Mammary epithelial cell (primary cell): ENCODE measurements at regions of chr2 and their contacts with region 1.

Region 1: GRCh38 chr2:170486730-170487129 is 228.4 kb upstream of the SP5 start:
- DNase-seq: no peak
- H3K4me3 ChIP-seq: no peak overlapping the region
- H3K27ac ChIP-seq: no peak overlapping the region
- H3K4me1 ChIP-seq: no peaks in the 10 kb centered on the region
- H3K27me3 ChIP-seq: no peaks in the 10 kb centered on the region
- CTCF ChIP-seq: peak in 1 of 2 donors; percentile 30

Region 2: GRCh38 chr2:170454471-170455372 is 32.0 kb before region 1 on chr2:
- CTCF ChIA-PET with region 1: no interaction called
- dilution Hi-C with region 1: loop called (anchors 5 kb)
- in situ Hi-C with region 1: no loop called
- intact Hi-C with region 1: no loop called
- DNase-seq: peak; percentile 8
- H3K4me3 ChIP-seq: no peak overlapping the region
- H3K27ac ChIP-seq: no peak overlapping the region
- H3K4me1 ChIP-seq: no peaks in the 10 kb centered on the region
- H3K27me3 ChIP-seq: no peaks in the 10 kb centered on the region
- CTCF ChIP-seq: no peak

Region 3: GRCh38 chr2:170715062-170715931 is 228.6 kb after region 1 on chr2 and contains the start of gene SP5:
- CTCF ChIA-PET with region 1: no interaction called
- dilution Hi-C with region 1: no loop called
- in situ Hi-C with region 1: no loop called
- intact Hi-C with region 1: loop called (anchors 10 kb)
- DNase-seq: no peak
- H3K4me3 ChIP-seq: peak within 1 kb of the TSS; percentile 39 to 57 (median 40)
- H3K27ac ChIP-seq: no peak within 1 kb of the TSS
- H3K4me1 ChIP-seq: peaks cover 31% of the 10 kb centered on the region
- H3K27me3 ChIP-seq: peaks cover 68% of the 10 kb centered on the region
- CTCF ChIP-seq: no peak
- total RNA-seq, gene SP5: not detected

Region 4: DNA sequence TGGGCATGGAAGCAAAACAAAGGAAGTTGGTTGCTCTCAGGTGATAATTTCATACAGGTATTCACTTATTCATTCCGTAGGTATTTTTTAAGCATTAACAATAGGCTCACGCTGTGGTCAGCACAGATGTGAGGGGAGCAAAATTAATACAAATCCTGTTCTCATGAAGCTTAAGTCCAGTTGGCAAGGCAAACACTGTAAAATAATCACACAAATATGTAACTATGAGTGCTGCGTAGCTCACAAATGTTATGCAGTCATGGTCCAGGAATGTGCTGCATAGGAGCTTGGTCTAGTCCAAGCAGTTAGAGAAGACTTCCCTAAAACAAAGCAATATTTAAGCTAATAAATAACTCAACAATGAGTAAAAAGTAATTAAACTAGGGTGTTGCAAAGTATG is 252.3 kb after region 1 on chr2:
- CTCF ChIA-PET with region 1: no interaction called
- dilution Hi-C with region 1: no loop called
- in situ Hi-C with region 1: no loop called
- intact Hi-C with region 1: no loop called
- DNase-seq: peak; percentile 96
- H3K4me3 ChIP-seq: no peak overlapping the region
- H3K27ac ChIP-seq: peak overlapping the region; percentile 98
- H3K4me1 ChIP-seq: peaks cover 31% of the 10 kb centered on the region
- H3K27me3 ChIP-seq: no peaks in the 10 kb centered on the region
- CTCF ChIP-seq: no peak

Region 5: DNA sequence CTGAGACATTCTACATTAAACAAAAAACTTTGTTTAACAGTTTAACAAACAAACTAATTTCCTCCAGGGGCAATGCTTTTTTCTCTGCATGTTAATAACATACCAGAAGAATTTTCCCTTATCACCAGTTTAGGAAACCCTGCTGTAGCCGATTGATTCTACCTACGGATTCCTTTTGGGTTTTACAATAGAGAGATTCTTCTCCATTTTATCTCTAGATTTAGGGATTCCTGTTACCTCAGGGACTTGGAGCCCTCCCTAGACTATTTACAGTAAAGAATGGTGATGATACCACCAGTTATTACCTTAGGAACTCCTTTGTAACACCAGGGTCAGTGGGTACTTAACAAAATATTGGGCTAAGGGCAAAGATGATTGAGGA is 278.1 kb after region 1 on chr2:
- CTCF ChIA-PET with region 1: no interaction called
- dilution Hi-C with region 1: no loop called
- in situ Hi-C with region 1: no loop called
- intact Hi-C with region 1: loop called (anchors 1 kb)
- DNase-seq: no peak
- H3K4me3 ChIP-seq: no peak overlapping the region
- H3K27ac ChIP-seq: no peak overlapping the region
- H3K4me1 ChIP-seq: no peaks in the 10 kb centered on the region
- H3K27me3 ChIP-seq: no peaks in the 10 kb centered on the region
- CTCF ChIP-seq: no peak